MCF 10A (cell line): ENCODE measurements at regions of chr16 and their contacts with region 1.

Region 1: DNA sequence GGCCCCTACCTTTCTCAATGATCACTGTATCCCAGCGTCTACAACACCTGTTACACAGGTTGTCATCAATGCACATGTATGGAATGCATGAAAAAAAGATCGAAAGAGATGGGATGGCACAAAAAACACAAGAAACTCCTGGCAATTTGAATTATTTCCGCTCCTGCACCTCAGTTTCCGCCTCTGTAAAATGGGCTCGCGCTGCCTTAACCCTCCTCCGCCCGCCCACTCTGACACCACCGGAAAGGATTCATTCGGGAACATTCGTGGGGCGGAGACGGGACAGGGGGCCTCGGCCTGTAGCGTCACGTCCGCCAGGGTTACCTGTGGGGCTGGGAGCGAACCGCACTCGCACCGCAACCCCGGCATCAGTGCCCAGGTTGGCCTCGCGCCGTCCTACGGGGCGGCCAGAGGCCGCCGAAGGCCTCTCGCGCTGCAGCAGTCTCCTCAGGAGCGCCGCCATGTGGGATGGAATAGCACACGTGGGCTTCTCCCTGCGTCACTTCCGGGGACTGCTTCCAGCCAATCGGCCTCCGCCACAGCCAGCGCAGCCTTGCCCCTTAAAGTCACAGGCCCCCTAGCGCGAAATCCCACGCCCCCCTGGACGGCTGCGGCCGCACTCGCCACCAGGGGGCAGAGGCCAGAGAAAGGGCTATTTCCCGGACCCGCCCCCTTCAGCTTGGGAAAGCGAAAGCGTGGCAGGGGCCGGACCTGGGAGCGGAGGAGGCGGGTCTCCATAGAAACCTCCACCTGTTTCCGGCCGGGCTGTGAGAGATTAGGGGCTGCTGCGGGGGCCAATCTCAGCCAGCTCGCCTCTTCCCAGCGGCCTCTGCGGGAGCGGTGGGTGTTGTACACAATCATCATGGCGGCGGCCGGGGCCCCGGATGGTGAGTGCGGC is at the starts of genes EARS2 and UBFD1:
- DNase-seq: peak; percentile 98
- H3K4me3 Mint-ChIP-seq: peak within 1 kb of the TSS; percentile 96
- H3K27ac Mint-ChIP-seq: peak within 1 kb of the TSS; percentile 88
- H3K4me1 Mint-ChIP-seq: peaks cover 10% of the 10 kb centered on the region
- H3K27me3 Mint-ChIP-seq: no peaks in the 10 kb centered on the region
- CTCF ChIP-seq: peak; percentile 87
- total RNA-seq, gene EARS2: 24.4 and 32.8 TPM in 2 replicates
- total RNA-seq, gene UBFD1: 49.1 and 50.8 TPM in 2 replicates

Region 2: DNA sequence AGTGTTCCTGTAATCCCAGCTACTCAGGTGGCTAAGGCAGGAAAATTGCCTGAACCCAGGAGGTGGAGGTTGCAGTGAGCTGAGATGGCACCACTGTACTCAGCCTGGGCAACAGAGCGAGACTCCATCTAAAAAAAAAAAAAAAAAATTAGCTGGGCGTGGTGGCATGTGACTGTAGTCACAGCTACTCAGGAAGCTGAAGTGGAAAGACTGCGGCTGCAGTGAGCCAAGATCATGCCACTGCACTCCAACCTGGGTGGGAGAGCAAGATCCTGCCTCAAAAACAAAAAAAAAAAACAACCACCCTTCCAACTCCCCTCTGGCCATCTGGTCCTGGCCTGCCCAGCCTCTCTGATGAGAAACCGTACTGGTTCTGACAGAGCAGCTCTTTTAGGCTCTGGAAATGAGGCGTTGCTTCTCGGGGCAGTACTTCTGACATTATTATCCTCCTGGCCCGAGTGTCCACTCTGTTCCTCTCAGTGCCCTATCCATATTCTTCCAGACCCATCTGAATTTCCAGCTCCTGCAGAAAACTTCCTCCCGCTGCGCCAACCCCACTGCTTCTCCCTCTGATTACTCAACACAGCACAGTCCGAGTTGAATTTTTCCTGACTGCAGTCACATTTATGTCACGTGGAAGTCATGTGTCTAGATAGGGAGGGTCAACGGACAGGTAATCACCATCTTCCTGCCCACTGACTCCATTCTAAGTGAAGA is 60.1 kb before region 1 on chr16:
- CTCF ChIA-PET with region 1: no interaction called
- POLR2A ChIA-PET with region 1: interaction called, 11 read pairs
- intact Hi-C with region 1: no loop called
- DNase-seq: peak; percentile 62
- H3K4me3 Mint-ChIP-seq: peak overlapping the region; percentile 33
- H3K27ac Mint-ChIP-seq: peak overlapping the region; percentile 33
- H3K4me1 Mint-ChIP-seq: peaks cover 29% of the 10 kb centered on the region
- H3K27me3 Mint-ChIP-seq: no peaks in the 10 kb centered on the region
- CTCF ChIP-seq: no peak

Region 3: GRCh38 chr16:23510164-23510914 is 46.8 kb before region 1 on chr16 and contains the start of gene GGA2:
- CTCF ChIA-PET with region 1: interaction called, 3 read pairs
- POLR2A ChIA-PET with region 1: interaction called, 20 read pairs
- intact Hi-C with region 1: loop called (anchors 2 kb)
- DNase-seq: peak; percentile 69
- H3K4me3 Mint-ChIP-seq: peak within 1 kb of the TSS; percentile 90
- H3K27ac Mint-ChIP-seq: peak within 1 kb of the TSS; percentile 46
- H3K4me1 Mint-ChIP-seq: peaks cover 19% of the 10 kb centered on the region
- H3K27me3 Mint-ChIP-seq: no peaks in the 10 kb centered on the region
- CTCF ChIP-seq: no peak
- total RNA-seq, gene GGA2: 22.2 and 40.9 TPM in 2 replicates

Region 4: GRCh38 chr16:23595951-23596720 is 39.0 kb after region 1 on chr16 and contains the start of gene NDUFAB1:
- CTCF ChIA-PET with region 1: interaction called, 12 read pairs
- POLR2A ChIA-PET with region 1: interaction called, 8 read pairs
- intact Hi-C with region 1: loop called (anchors 1 kb)
- DNase-seq: peak; percentile 87
- H3K4me3 Mint-ChIP-seq: peak within 1 kb of the TSS; percentile 74
- H3K27ac Mint-ChIP-seq: peak within 1 kb of the TSS; percentile 51
- H3K4me1 Mint-ChIP-seq: peaks cover 15% of the 10 kb centered on the region
- H3K27me3 Mint-ChIP-seq: no peaks in the 10 kb centered on the region
- CTCF ChIP-seq: peak; percentile 97
- total RNA-seq, gene NDUFAB1: 98.3 and 112 TPM in 2 replicates

Region 5: DNA sequence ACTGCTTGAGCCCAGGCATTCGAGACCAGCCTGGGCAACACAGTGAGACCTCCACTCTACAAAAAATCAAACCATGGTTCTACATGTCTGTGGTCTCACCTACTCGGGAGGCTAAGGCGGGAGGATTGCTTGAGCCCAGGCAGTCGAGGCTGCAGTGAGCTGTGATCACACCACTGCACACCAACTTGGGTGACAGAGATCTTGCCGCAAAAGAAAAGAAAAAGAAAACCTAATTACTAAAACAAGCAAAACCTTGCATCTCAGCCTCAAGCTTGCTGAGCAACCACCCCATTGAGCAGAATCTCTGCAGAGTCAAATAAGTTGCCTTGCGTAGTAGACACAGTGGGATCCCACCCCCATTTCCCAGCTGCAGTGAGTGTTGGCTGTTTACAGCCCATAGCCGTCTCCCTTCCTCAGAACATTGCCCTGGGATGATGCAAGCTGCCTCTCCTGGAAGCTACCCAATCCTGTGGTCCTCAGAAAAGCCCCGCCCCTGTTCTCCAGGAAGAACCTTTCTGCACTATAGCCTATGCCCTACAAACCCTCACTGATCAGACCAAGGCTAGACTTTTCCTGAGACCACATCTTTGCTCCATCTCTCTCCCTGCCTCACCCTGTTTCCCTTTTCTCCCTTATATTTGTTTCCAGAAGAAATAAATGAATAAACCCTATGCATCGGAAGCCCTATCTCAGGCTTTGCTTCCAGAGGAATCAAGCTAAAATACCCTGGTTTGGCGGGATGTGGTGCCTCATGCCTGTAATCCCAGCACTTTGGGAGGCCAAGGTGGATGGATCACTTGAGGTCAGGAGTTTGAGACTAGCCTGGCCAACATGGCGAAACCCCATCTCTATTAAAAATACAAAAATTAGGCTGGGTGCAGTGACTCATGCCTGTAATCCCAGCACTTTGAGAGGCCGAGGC is 172.6 kb after region 1 on chr16:
- CTCF ChIA-PET with region 1: no interaction called
- POLR2A ChIA-PET with region 1: no interaction called
- intact Hi-C with region 1: loop called (anchors 1 kb)
- DNase-seq: peak; percentile 78
- H3K4me3 Mint-ChIP-seq: no peak overlapping the region
- H3K27ac Mint-ChIP-seq: no peak overlapping the region
- H3K4me1 Mint-ChIP-seq: peaks cover 14% of the 10 kb centered on the region
- H3K27me3 Mint-ChIP-seq: no peaks in the 10 kb centered on the region
- CTCF ChIP-seq: no peak

Region 6: GRCh38 chr16:23863511-23864422 is 306.6 kb after region 1 on chr16:
- CTCF ChIA-PET with region 1: no interaction called
- POLR2A ChIA-PET with region 1: no interaction called
- intact Hi-C with region 1: no loop called
- DNase-seq: no peak
- H3K4me3 Mint-ChIP-seq: no peak overlapping the region
- H3K27ac Mint-ChIP-seq: no peak overlapping the region
- H3K4me1 Mint-ChIP-seq: no peaks in the 10 kb centered on the region
- H3K27me3 Mint-ChIP-seq: peaks cover 42% of the 10 kb centered on the region
- CTCF ChIP-seq: no peak